AG04449 (cell line): ENCODE measurements at regions of chr5 and their contacts with region 1.

Region 1: GRCh38 chr5:147576646-147577535 is 67.0 kb upstream of the DPYSL3 start:
- DNase-seq: no peak
- H3K4me3 ChIP-seq: no peak overlapping the region
- CTCF ChIP-seq: peak; percentile 81

Region 2: DNA sequence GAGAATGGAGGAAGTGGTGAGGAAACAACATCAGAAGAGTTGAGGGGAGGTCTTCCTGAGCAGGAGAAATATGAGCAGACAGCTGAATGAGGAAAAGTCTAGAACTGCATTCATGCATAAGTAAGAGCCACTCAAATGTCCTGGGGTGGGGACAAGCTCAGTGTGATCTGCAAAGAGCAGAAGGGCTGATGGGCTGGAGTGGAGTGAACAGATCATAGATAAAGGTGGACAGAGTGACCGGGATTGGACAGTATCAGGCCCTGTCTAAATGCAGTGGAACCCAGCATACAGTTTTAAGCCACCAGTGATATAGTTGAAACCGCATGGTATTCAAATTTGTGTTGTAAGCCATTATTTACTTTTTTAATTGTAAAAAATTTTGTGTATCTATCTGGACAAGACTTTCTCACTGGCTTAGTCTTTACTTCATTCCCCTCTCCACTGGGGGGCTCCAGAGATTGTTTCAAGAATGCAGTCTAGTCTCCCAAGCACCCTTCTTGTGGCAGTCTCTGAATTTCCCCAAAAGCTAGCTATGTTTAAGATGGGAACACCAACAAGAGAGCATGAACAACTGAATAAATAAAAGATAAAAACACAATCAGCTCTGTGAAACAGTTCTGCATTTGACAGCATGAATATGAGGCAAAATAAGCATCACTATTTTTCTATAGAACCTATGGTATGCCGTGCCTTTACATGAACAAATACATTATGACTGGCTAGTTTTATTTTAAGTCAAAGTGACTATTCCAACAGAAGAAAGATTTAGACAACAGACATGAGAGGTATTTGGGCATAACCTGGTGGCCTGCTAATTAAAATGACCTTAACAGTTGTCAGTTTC is 352.7 kb before region 1 on chr5:
- CTCF ChIA-PET with region 1: interaction called, 78 read pairs
- POLR2A ChIA-PET with region 1: no interaction called
- DNase-seq: peak; percentile 7
- H3K4me3 ChIP-seq: no peak overlapping the region
- CTCF ChIP-seq: peak; percentile 52

Region 3: DNA sequence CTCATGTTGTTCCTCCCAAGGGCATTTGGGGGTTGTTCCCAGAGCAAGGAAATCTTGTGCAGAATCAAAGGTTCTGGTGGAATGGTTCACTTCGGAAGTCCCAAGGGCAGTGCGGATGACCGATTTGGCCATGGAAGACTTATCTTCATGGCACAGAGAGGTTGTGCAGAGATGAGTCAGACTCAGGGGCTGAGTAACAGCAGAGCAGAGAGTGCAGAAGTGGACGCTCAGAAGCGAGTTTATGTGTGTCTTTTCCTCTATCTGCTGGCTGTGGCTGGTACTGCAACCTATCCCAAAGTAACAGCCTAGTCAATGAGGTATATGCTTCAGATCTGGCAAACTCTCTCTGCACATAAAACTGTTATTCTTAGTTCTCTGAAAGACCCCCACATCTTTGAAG is 185.1 kb before region 1 on chr5:
- CTCF ChIA-PET with region 1: interaction called, 35 read pairs
- POLR2A ChIA-PET with region 1: no interaction called
- DNase-seq: peak; percentile 21
- H3K4me3 ChIP-seq: no peak overlapping the region
- CTCF ChIP-seq: peak; percentile 67

Region 4: DNA sequence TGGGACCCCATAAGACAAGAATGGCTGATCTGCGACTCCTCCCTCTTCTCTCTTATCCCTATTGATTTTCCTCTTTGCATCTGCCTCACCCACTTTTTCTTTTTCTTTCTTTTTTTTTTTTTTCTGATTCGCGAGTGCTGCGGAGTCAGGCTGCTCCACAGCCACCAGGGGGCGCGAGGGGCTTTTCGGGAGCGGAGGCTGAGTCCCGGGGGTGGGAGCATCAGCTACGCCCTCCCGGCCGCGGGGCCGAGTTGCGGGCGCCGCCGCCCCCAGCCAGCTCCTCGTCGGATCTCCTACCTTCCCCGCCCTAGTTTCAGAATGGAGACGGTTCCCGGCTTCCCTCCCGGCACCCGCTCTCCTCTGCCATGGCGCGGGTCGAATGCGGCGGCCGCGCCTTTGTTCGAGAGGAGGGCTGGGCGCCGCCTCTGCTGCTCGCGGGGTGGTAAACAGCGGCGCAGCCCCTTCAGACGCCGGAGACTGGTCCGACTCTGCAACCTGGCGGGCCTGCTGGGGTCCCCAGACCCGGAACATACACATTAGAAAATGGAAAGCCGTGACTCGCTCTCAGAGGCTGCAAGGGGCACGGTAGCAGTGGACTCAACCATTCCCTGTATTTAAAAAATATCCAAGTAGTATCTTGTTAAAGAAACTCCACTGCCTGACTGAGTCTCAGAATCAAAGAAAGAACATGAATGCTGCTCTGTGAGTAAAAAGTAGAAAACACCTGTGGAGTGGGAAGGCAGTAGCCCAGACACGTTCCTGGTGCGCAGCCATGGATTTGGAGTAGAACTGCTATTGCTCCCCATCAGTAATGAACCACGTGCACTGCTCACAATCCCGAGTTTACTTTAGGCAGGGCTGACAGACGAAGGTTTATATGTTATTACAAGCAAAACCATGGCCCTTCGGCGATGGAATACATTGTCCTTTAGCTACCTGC is 122.7 kb before region 1 on chr5:
- CTCF ChIA-PET with region 1: interaction called, 50 read pairs
- POLR2A ChIA-PET with region 1: no interaction called
- DNase-seq: no peak
- H3K4me3 ChIP-seq: peak overlapping the region; percentile 81
- CTCF ChIP-seq: peak; percentile 86

Region 5: DNA sequence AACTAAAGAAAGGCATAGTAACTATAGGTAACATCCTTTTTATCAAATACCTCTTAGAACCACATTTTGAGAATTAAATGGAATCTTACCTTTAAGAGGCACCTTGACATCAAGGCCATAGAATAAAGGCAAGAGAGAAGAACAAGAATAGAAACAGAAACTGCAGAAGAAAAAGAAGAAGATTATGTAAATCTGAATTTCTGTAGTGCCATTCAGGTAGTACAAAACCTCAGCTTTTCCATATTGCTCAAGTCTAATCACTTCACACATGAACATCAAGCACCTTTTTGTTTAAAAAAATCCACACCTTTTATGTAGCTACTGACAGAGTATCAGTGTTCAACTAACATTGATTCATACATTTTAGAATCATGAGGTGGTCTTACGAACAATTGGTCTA is 24.8 kb after region 1 on chr5:
- CTCF ChIA-PET with region 1: interaction called, 10 read pairs
- POLR2A ChIA-PET with region 1: no interaction called
- DNase-seq: no peak
- H3K4me3 ChIP-seq: no peak overlapping the region
- CTCF ChIP-seq: no peak